Activated B cell treated with CpG ODN at 0.5 μM for 24 hours (primary cell): ENCODE measurements at regions of chr14 and their contacts with region 1.

Region 1: GRCh38 chr14:22420598-22421186 is 168.3 kb downstream of the DAD1 start:
- DNase-seq: no peak
- ATAC-seq: no peak
- H3K4me3 Mint-ChIP-seq: no peak overlapping the region
- H3K27ac Mint-ChIP-seq: no peak overlapping the region
- H3K4me1 Mint-ChIP-seq: peaks cover 31% of the 10 kb centered on the region
- H3K27me3 Mint-ChIP-seq: no peaks in the 10 kb centered on the region
- CTCF ChIP-seq: no peak

Region 2: DNA sequence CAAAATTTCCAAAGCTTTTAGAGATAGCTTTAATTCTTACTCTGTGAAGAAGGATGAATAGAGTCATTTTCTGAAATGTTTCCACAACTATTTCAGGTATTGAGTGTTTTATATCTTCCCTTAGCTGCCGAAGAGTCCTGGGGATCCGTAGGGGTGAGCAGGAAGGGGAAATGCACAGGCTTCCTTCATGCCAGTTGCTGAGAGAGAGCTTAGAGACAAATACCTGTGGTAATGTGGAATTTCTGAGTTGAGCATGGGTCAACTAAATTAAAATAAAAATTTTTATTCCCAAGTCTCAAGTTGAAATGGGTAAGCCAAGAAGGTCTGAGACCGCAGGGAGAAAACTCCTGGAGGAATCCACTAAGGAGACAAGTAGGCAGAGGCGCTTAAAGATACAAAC is 17.4 kb before region 1 on chr14:
- CTCF ChIA-PET with region 1: no interaction called
- POLR2A ChIA-PET with region 1: no interaction called
- intact Hi-C with region 1: loop called (anchors 2 kb)
- DNase-seq: no peak
- ATAC-seq: no peak
- H3K4me3 Mint-ChIP-seq: no peak overlapping the region
- H3K27ac Mint-ChIP-seq: no peak overlapping the region
- H3K4me1 Mint-ChIP-seq: no peaks in the 10 kb centered on the region
- H3K27me3 Mint-ChIP-seq: peaks cover 2% of the 10 kb centered on the region
- CTCF ChIP-seq: no peak